ENCODE measurements at regions of chr11 and their contacts with region 1.

Region 1: DNA sequence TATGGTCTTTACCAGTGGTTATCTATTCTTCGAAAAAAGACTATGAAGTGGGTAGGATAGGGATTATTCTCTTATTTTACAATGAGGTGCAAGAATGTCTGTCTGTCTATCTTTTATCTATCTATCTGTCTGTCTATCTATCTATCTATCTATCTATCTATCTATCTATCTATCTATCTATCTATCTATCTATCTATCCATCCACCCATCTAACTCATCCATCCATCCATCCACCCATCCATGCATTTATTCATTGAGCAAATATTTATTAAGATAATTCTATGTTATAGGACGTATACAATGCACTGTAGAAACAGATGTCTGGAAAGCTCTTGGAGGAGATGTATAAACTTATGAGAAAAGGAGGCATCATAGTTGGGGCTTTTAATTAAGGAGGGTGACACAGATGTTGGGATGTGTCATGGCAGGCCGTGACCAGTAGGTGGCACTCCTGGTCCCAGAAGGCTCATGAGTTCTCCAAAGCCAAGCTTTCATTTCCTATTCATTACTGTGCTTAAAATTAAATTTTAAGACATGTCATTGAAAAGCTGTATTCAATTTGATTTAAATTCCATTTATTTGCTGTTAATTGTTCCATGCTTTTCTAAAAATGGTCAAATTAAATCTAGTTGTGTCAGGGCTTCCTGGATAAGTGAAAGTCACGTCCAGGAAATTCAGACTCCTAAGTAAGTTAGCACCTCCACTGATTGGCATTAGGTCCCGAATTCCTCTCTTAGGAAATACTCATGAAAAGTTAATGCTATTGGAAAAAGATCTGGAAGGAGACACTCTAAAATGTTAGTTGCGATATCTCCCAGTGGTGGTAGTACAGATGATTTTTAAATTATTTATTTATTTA is 19.0 kb upstream of the E2F8 start:
- DNase-seq: peak; percentile 73
- CTCF ChIP-seq: peak; percentile 93

Region 2: GRCh38 chr11:18974192-18974591 is 285.5 kb before region 1 on chr11:
- CTCF ChIA-PET with region 1: no interaction called
- POLR2A ChIA-PET with region 1: no interaction called
- DNase-seq: no peak
- CTCF ChIP-seq: no peak

Region 3: GRCh38 chr11:19071255-19071654 is 188.5 kb before region 1 on chr11:
- CTCF ChIA-PET with region 1: interaction called, 31 read pairs
- POLR2A ChIA-PET with region 1: no interaction called
- DNase-seq: peak; percentile 79
- CTCF ChIP-seq: peak; percentile 93

Region 4: GRCh38 chr11:19228968-19229367 is 30.7 kb before region 1 on chr11:
- CTCF ChIA-PET with region 1: interaction called, 11 read pairs
- POLR2A ChIA-PET with region 1: no interaction called
- DNase-seq: no peak
- CTCF ChIP-seq: no peak

Region 5: DNA sequence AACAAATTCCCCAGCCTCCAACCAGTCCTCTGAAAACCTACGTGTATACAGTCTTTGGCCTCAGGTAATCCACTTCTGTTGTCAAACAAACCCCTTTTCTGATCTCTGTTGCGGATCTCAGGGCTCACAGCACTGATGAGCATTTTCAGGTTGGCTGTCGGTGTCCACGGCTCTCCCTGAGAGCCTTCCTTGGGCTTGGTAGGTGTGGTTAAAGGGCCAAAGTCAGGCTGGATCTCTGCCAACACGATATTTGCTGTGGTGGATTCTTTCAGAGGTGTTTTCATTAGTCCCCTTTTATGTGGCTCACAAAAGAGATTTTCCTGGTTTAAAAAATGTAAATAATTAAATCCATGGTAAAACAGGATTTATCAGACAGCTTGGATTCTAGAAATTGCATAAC is 21.9 kb before region 1 on chr11:
- CTCF ChIA-PET with region 1: interaction called, 20 read pairs
- POLR2A ChIA-PET with region 1: no interaction called
- DNase-seq: no peak
- CTCF ChIP-seq: no peak

Region 6: DNA sequence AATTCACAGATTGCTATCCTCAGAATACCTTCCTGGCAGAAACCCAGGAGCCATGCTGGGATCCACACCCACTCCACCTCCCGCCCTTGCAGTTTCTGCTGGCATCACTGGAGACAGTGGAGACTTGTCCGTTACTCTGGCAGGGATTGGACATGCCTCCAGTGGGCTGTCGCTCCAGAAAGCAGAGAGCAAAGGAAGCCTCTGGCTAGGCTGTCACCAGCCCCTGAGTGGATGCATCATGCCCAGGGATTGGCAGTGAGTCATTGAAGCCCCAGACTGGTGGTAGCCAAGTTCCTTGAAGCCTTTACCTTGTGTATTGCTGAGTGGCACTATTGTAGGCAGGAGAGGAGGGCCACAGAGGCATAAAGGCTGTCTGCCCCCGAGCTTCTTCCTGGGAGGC is 15.8 kb after region 1 on chr11:
- CTCF ChIA-PET with region 1: interaction called, 51 read pairs
- POLR2A ChIA-PET with region 1: no interaction called
- DNase-seq: no peak
- CTCF ChIP-seq: no peak

Region 7: GRCh38 chr11:19978668-19979518 is 719.2 kb after region 1 on chr11:
- CTCF ChIA-PET with region 1: no interaction called
- POLR2A ChIA-PET with region 1: no interaction called
- DNase-seq: peak; percentile 46
- CTCF ChIP-seq: no peak

Measured in GM10248 (cell line).